Endothelial cell of umbilical vein (primary cell): ENCODE measurements at regions of chr13 and their contacts with region 1.

Region 1: GRCh38 chr13:113758651-113759524 is at the start of gene TMEM255B:
- DNase-seq: peak; percentile 81
- H3K4me3 ChIP-seq: peak within 1 kb of the TSS; percentile 80 to 93 (median 91)
- H3K27ac ChIP-seq: peak within 1 kb of the TSS; percentile 87
- H3K4me1 ChIP-seq: peaks cover 18% of the 10 kb centered on the region
- H3K27me3 ChIP-seq: no peaks in the 10 kb centered on the region
- CTCF ChIP-seq: peak in 1 of 2 donors; percentile 28
- POLR2A ChIP-seq: peak; percentile 78
- total RNA-seq, gene TMEM255B: 85.0 and 105 TPM in 2 replicates

Region 2: DNA sequence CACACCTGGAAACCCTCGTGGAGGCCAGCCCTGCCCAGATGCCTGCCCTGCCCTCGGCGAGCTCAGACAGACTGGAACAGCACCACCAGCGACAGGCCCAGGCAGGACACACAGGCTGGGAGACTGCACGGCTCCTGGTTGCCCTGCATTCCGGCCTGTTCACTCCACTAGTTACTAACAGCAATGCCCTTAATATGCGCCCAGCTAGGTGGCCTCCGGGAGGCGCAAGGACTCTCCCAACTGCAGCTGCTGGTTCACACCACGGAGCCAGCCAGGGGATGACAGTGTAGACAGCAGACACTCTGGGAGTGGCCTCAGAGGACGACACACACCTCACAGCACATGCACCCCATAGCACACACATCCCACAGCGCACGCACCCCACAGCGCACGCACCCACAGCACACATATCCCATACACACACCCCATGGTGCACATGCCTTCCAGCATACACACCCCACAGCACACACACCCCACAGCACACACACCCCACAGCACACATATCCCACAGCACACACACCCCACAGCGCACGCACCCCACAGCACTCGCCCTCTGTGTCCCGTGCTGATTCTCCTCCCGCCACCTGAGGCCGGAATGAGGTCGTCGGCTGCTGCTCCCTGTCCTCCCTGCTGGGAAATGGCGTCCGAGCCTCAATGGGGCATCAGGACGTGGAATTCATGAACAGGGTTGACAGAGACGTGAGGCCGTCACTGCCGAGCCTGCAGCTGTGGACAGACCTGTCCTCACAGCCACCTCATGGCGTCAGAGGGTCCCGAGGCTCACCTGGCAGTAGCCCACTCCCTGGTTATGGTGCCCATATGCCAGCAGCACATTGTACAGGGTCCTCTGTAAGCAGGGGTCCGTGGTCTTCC is 408.6 kb before region 1 on chr13:
- CTCF ChIA-PET with region 1: no interaction called
- POLR2A ChIA-PET with region 1: no interaction called
- dilution Hi-C with region 1: no loop called
- intact Hi-C with region 1: no loop called
- DNase-seq: no peak
- H3K4me3 ChIP-seq: no peak overlapping the region
- H3K27ac ChIP-seq: no peak overlapping the region
- H3K4me1 ChIP-seq: no peaks in the 10 kb centered on the region
- H3K27me3 ChIP-seq: no peaks in the 10 kb centered on the region
- CTCF ChIP-seq: no peak
- POLR2A ChIP-seq: no peak

Region 3: GRCh38 chr13:113562085-113562749 is 196.7 kb before region 1 on chr13:
- CTCF ChIA-PET with region 1: no interaction called
- POLR2A ChIA-PET with region 1: no interaction called
- dilution Hi-C with region 1: no loop called
- intact Hi-C with region 1: no loop called
- DNase-seq: peak; percentile 73
- H3K4me3 ChIP-seq: no peak overlapping the region
- H3K27ac ChIP-seq: no peak overlapping the region
- H3K4me1 ChIP-seq: no peaks in the 10 kb centered on the region
- H3K27me3 ChIP-seq: no peaks in the 10 kb centered on the region
- CTCF ChIP-seq: peak; percentile 78 to 91
- POLR2A ChIP-seq: no peak

Region 4: DNA sequence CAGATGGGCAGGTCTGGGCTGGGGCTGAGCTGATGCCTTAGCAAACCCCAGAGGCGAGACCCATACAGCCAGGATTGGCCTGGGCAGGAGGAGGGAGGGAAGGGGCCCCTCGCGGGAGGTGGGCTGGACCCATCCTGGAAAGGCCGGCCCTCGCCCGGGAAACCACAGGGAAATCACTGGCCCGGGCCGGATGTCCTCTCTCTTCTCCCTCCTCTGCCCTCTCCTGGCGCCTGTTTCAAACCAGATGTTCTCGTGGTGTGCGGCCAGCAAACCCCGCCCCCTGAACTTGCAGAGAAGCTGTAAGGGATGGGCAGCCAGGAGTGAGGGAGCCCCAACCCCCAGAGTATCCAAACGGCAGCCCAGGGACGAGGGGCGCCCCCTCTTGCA is 43.2 kb after region 1 on chr13:
- CTCF ChIA-PET with region 1: interaction called, 6 read pairs
- POLR2A ChIA-PET with region 1: no interaction called
- dilution Hi-C with region 1: no loop called
- intact Hi-C with region 1: loop called (anchors 1 kb)
- DNase-seq: no peak
- H3K4me3 ChIP-seq: no peak overlapping the region
- H3K27ac ChIP-seq: no peak overlapping the region
- H3K4me1 ChIP-seq: peaks cover 3% of the 10 kb centered on the region
- H3K27me3 ChIP-seq: no peaks in the 10 kb centered on the region
- CTCF ChIP-seq: no peak
- POLR2A ChIP-seq: no peak